Heart left ventricle (tissue), 16 donors: ENCODE measurements at regions of chr2 and their contacts with region 1.

Region 1: GRCh38 chr2:176001916-176002687 is at the start of gene LNPK:
- DNase-seq: peak; percentile 94 to 97 (median 94)
- ATAC-seq: peak; percentile 92 to 98 (median 98)
- H3K4me3 ChIP-seq: peak within 1 kb of the TSS; percentile 54 to 90 (median 80)
- H3K27ac ChIP-seq: peak within 1 kb of the TSS; percentile 57 to 93 (median 88)
- H3K4me1 ChIP-seq: peaks cover 0 to 38% (median 17%) of the 10 kb centered on the region in 12 donors
- H3K27me3 ChIP-seq: no peaks in the 10 kb centered on the region
- CTCF ChIP-seq: no peak
- POLR2A ChIP-seq: peak; percentile 5 to 91
- total RNA-seq, gene LNPK: 16.3 to 45.6 (median 33.5) TPM

Region 2: GRCh38 chr2:176079831-176080539 is 77.9 kb after region 1 on chr2:
- intact Hi-C with region 1: loop called in 2 of 10 experiments (anchors 5 to 10 kb)
- DNase-seq: peak in 2 of 5 donors; percentile 46 to 68
- ATAC-seq: peak in 3 of 4 donors; percentile 65 to 74 (median 71)
- H3K4me3 ChIP-seq: peak overlapping the region in 8 of 12 donors; percentile 14 to 40 (median 27)
- H3K27ac ChIP-seq: peak overlapping the region in 1 of 12 donors; percentile 84
- H3K4me1 ChIP-seq: peaks cover 0 to 38% (median 12%) of the 10 kb centered on the region in 12 donors
- H3K27me3 ChIP-seq: peaks cover 88 to 99% (median 97%) of the 10 kb centered on the region in 9 donors
- CTCF ChIP-seq: peak; percentile 56 to 77 (median 65)
- POLR2A ChIP-seq: no peak

Region 3: DNA sequence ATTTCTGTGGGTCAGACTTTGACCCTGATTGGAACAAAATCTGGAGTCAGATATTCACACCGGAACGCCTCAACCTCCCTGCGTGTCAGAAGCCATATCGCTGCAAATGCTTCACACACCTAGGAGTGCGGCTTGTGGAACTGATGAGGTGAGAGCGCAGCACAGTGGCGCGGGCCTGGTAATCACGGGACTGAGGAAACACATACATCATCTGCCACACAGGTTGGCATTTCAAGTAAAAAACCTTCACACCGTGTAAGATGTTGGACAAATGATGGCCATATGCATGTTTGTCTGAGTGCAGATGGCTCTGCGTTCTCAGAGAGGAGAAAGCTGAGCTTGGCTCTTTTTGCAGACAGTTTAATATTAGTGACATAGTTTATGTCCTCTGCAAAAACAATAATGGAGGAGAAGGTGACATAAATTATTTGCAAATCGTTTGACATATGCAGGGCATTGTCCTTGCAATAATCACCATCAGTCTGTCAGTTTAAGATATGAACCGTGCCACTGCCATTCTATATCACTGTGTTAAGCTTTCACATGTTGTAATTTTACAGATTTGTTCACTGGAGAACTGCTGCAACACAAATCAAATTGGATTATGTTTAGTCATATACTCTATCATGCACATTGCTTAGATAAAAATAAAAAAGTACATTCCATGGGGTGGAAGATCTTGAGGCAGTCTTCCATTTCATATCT is 368.5 kb after region 1 on chr2:
- intact Hi-C with region 1: no loop called
- DNase-seq: no peak
- ATAC-seq: no peak
- H3K4me3 ChIP-seq: no peak overlapping the region
- H3K27ac ChIP-seq: no peak overlapping the region
- H3K4me1 ChIP-seq: no peaks in the 10 kb centered on the region
- H3K27me3 ChIP-seq: no peaks in the 10 kb centered on the region
- CTCF ChIP-seq: no peak
- POLR2A ChIP-seq: no peak